ENCODE measurements at regions of chr5 and their contacts with region 1.

Region 1: DNA sequence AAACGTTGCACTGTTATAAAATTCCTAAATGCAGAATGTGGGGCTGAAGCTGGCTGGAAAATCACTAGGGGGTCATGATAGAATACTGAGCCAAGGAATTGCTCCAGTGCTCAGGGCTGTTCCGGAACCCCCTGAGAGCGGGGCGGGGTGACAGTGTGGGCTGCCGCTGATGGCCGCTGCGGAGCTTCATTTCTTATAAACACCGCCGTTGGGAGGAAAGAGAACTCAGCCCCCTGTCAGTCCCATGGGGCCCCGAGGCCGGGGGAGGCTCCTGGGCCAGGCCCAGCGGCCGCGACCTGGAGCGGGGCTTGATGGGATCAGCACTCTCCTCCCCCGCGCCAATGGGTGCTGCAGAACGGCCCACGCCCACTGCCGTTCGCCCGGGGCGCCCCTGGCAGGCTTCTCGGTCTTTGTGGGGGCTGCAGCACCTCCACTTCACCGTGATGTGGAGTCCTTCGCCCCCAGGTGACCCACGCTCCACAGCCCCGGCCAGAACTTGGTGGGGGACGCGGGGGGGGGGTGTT is 5.2 kb upstream of the IRF1 start:
- DNase-seq: peak; percentile 94
- H3K4me3 Mint-ChIP-seq: peak overlapping the region; percentile 89
- H3K27ac Mint-ChIP-seq: peak overlapping the region; percentile 97
- H3K4me1 Mint-ChIP-seq: peaks cover 75% of the 10 kb centered on the region
- H3K27me3 Mint-ChIP-seq: no peaks in the 10 kb centered on the region

Region 2: DNA sequence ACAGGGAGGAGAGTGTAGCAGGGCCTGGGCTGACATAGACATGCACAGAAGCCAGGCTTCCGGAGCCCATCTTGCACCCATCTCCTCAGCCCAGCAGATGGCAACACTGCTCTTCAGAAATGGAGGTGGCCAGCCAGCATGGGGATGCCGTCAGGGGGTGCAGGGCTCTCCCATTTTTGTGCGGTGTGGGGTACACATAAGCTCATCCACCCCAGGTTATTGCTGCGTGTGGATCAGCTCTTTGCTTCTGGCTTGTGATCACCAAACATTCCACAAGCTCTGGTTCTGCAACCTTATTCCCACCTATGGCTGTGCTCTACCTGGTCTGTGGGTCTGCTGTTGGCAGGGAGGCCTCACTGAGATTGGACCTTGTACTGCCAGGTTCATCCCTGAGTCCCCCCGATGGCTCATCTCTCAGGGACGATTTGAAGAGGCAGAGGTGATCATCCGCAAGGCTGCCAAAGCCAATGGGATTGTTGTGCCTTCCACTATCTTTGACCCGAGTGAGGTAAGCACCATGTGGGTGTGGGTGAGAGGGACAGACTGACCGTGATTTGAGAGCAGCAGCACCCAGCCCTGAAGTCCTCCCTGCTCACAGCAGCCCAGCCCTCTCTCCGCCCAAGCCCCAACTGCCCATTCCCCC is 109.0 kb before region 1 on chr5:
- intact Hi-C with region 1: no loop called
- DNase-seq: peak; percentile 93
- H3K4me3 Mint-ChIP-seq: no peak overlapping the region
- H3K27ac Mint-ChIP-seq: no peak overlapping the region
- H3K4me1 Mint-ChIP-seq: peaks cover 51% of the 10 kb centered on the region
- H3K27me3 Mint-ChIP-seq: no peaks in the 10 kb centered on the region

Region 3: GRCh38 chr5:132410451-132411381 is 85.0 kb before region 1 on chr5:
- intact Hi-C with region 1: loop called (anchors 1 kb)
- DNase-seq: peak; percentile 98
- H3K4me3 Mint-ChIP-seq: peak overlapping the region; percentile 100
- H3K27ac Mint-ChIP-seq: peak overlapping the region; percentile 99
- H3K4me1 Mint-ChIP-seq: peaks cover 48% of the 10 kb centered on the region
- H3K27me3 Mint-ChIP-seq: no peaks in the 10 kb centered on the region

Region 4: GRCh38 chr5:132419502-132420468 is 75.9 kb before region 1 on chr5:
- intact Hi-C with region 1: loop called (anchors 1 kb)
- DNase-seq: peak; percentile 90
- H3K4me3 Mint-ChIP-seq: peak overlapping the region; percentile 72
- H3K27ac Mint-ChIP-seq: peak overlapping the region; percentile 87
- H3K4me1 Mint-ChIP-seq: peaks cover 79% of the 10 kb centered on the region
- H3K27me3 Mint-ChIP-seq: no peaks in the 10 kb centered on the region

Region 5: DNA sequence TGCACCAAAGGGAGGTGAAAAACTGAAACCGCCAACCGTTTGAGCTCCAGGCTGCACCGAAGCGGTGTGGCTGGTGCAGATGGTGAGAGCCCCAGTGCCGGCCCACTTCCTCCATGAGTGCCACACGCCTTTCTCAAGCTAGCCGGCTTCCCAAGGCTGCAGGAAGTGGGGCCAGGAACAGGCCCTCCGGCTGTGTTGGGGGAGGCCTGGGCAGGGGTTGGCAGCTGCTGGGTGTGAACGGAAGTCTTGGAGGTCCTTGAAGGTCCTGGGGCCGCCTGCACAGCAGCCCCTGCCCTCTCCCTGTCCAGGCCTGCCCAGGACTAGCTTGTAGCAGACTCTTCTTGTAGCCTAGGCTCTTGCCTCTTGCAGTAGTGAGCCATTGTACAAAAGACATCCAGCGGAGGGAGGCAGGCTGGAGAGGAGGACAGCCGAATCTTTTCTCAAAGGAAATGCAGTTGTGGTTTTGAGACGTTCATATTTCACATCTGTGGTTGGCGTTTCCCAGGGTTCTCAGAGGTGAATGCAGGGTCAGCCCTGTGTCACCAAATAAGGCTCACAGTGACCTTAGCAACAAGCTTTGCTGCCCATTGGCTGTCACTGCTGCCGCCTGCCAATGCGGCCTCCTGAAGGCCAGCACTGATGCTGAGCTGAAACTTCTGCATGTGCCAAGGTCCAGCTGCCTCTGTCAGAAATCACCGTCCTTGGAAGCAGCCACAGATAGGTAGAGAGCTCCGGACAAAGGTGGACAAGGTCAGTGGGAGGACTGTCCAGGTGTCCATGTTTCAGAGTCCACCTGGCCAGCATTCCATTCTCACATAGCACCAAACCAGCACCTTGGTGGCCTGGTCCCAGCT is 29.1 kb before region 1 on chr5:
- intact Hi-C with region 1: loop called (anchors 1 kb)
- DNase-seq: peak; percentile 93
- H3K4me3 Mint-ChIP-seq: peak overlapping the region; percentile 64
- H3K27ac Mint-ChIP-seq: peak overlapping the region; percentile 80
- H3K4me1 Mint-ChIP-seq: peaks cover 81% of the 10 kb centered on the region
- H3K27me3 Mint-ChIP-seq: no peaks in the 10 kb centered on the region

Region 6: DNA sequence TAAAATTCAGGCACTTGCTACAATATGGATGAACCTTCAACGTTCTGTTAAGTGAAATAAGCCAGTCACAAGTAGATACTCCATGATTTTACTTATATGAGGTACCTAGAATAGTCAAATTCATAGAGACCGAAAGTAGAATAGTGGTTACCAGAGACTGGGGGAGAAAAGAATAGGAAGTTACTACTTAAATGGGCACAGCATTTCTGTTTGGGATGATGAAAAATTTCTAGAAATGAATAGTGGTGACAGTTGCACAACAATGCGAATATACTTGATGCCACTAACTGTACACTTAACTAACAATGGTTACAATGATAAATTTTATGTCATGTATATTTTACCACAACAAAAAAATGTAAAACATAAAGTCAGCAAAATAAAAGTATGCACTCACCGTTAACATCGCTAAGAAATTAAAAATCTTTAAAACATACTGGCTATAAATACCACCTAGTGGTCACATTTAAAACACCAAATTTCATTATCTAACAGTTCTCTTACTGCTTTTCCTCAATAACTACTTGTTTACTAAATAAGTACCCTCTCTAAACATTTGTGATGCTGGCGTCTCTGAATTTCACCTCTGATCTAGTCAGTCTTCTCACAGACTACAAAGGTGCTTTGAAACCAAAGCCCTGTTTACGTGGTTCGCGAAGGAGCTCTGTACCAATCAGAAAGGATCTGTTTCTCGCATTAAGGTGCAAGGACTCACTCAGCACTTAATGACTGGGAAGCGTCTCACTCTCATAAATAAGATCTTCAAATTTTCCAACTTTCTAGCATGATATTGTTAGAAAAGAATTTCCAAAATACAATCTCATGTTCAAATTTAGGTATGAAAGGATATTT is 219.0 kb after region 1 on chr5:
- intact Hi-C with region 1: no loop called
- DNase-seq: no peak
- H3K4me3 Mint-ChIP-seq: peak overlapping the region; percentile 40
- H3K27ac Mint-ChIP-seq: peak overlapping the region; percentile 4
- H3K4me1 Mint-ChIP-seq: peaks cover 15% of the 10 kb centered on the region
- H3K27me3 Mint-ChIP-seq: no peaks in the 10 kb centered on the region

Region 7: GRCh38 chr5:132866342-132867045 is 370.8 kb after region 1 on chr5 and contains the starts of genes GDF9 and UQCRQ:
- intact Hi-C with region 1: loop called (anchors 2 kb)
- DNase-seq: peak; percentile 98
- H3K4me3 Mint-ChIP-seq: peak within 1 kb of the TSS; percentile 95
- H3K27ac Mint-ChIP-seq: peak within 1 kb of the TSS; percentile 99
- H3K4me1 Mint-ChIP-seq: peaks cover 24% of the 10 kb centered on the region
- H3K27me3 Mint-ChIP-seq: peaks cover 9% of the 10 kb centered on the region
- total RNA-seq, gene GDF9: 0.30 and 0.45 TPM in 2 replicates
- total RNA-seq, gene UQCRQ: 454 and 464 TPM in 2 replicates

Measured in activated CD4-positive, alpha-beta T cell treated with anti-CD3 and anti-CD28 coated beads, Interleukin-2, amount 10 ng/mL, durations not matched to agents 24 days and 14 days (primary cell).